ENCODE measurements at regions of chr16 and their contacts with region 1.

Region 1: GRCh38 chr16:71808593-71809459 is at the start of gene AP1G1:
- DNase-seq: peak; percentile 91
- H3K4me3 Mint-ChIP-seq: peak within 1 kb of the TSS; percentile 95
- H3K27ac Mint-ChIP-seq: peak within 1 kb of the TSS; percentile 100
- H3K4me1 Mint-ChIP-seq: peaks cover 16% of the 10 kb centered on the region
- H3K27me3 Mint-ChIP-seq: no peaks in the 10 kb centered on the region
- total RNA-seq, gene AP1G1: 90.6 and 91.6 TPM in 2 replicates

Region 2: GRCh38 chr16:71792176-71792575 is 16.6 kb before region 1 on chr16:
- intact Hi-C with region 1: no loop called
- DNase-seq: no peak
- H3K4me3 Mint-ChIP-seq: no peak overlapping the region
- H3K27ac Mint-ChIP-seq: peak overlapping the region; percentile 38
- H3K4me1 Mint-ChIP-seq: peaks cover 48% of the 10 kb centered on the region
- H3K27me3 Mint-ChIP-seq: no peaks in the 10 kb centered on the region

Region 3: DNA sequence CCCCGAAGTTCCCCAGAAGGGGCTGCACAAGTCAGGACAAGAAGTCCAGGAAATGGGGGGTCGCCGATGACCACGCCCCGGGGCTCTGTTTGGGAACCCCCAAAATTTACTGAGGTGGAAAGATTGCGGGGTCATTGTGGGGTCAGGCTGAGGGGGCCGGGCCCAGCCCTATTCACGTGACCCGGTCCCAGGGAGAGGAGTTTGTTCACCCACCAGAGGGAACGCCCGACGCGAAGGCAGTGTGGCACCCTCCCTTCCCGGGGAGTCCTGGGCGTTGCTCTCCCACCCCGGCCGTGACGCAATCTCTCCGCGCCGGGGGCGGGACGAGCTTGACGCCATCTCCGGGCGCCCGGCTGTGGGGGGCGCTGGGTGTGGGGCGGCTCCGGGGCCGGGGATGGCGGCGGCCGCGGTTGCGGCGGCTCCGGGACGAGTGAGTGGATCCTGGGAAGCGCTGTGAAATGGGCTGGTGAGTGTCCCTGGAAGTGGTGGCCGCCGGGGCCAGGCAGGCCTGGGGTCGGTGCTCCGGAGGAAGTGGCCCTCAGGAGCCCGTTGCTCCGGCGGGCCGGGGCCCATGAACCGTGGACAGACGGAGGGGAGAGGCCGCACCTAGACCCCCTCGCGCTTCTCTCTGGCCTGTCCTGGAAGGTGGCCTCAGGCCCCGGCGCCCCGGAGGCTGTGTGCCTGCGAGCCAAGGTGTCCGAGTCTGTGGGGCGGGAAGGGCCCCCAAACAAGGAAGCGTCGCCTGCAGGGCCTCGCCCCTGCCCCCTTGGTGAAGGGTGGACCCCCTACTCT is 37.0 kb after region 1 on chr16 and contains the start of gene ATXN1L:
- intact Hi-C with region 1: loop called (anchors 1 kb)
- DNase-seq: peak; percentile 92
- H3K4me3 Mint-ChIP-seq: peak within 1 kb of the TSS; percentile 89
- H3K27ac Mint-ChIP-seq: peak within 1 kb of the TSS; percentile 94
- H3K4me1 Mint-ChIP-seq: peaks cover 27% of the 10 kb centered on the region
- H3K27me3 Mint-ChIP-seq: no peaks in the 10 kb centered on the region
- total RNA-seq, gene ATXN1L: 17.2 and 19.7 TPM in 2 replicates

Region 4: DNA sequence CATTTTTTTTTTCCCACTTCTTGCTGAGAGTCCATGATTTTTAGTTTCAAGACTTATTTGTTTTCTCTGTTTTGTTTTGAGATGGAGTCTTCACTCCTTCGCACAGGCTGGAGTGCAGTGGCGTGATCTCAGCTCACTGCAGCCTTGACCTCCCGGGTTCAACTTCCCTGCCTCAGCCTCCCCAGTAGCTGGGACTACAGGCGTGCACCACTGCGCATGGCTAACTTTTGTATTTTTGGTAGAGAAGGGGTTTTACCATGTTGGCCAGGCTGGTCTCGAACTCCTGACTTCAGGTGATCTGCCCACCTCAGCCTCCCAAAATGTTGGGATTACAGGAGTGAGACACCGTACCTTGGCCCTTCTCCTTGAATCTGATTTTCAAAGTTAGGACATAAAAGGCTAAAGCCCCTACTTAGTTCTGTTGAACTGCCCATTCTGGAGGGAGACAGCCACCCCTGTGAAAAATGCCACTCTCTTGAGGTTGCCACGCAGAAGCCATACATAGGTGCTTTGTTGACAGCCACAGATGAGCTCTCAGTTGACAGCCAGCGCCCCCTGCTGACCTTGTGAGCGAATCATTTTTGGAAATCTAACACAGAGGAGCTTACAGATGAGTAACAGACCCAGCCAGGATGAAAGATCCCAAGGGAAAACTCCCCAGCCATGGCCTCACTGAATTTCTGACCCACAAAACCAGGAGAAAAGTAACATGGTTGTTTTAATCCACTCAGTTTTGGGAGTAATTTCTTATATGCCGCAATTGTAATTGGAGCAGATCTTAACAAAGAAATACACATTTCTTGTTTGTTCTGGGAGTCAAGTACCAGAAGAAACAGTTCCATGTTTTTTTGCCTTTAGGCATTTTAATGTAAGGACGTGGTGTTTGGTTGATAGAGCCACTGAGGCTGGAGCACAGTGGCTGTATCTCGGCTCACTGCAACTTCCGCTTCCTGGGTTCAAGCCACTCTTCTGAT is 152.5 kb after region 1 on chr16:
- intact Hi-C with region 1: loop called (anchors 5 kb)
- DNase-seq: peak; percentile 67
- H3K4me3 Mint-ChIP-seq: no peak overlapping the region
- H3K27ac Mint-ChIP-seq: no peak overlapping the region
- H3K4me1 Mint-ChIP-seq: peaks cover 18% of the 10 kb centered on the region
- H3K27me3 Mint-ChIP-seq: peaks cover 4% of the 10 kb centered on the region

Measured in activated T-helper 2 cell treated with anti-CD3 and anti-CD28 coated beads, Interferon-gamma antibody, Interleukin-2, Interleukin-4, amounts not matched to agents 10 μg/mL and 5 μg/mL and 100 μg/mL, durations not matched to agents 14 hours and 24 hours and 36 hours (primary cell).